Cardiac septum (tissue), 1 donor: ENCODE measurements at regions of chr3 and their contacts with region 1.

Region 1: DNA sequence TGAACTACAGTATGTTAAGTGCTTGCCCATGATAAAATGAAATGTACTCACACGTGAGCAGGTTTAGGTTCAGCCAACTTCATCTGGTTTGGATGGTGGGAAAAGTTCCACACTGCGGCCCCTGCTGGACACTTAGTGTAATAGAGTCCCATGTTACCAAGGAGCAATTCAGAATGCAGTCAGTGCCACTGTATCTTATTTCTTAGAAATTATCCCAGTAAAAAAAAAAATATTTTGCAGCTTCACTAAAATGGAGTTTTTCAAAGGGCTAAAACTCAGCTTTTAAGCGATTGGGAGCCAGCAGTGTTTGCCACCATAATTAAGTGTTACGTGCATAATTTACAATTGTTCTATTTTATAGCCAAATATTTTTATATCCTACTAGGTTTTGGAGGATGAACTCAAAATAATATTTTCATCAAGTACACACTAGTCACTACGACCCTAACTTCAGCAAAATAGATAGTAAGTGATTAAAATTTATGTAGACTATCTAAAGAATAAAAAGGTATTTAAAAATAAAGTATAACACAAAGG is 371.7 kb upstream of the GBE1 start:
- DNase-seq: peak; percentile 77

Region 2: DNA sequence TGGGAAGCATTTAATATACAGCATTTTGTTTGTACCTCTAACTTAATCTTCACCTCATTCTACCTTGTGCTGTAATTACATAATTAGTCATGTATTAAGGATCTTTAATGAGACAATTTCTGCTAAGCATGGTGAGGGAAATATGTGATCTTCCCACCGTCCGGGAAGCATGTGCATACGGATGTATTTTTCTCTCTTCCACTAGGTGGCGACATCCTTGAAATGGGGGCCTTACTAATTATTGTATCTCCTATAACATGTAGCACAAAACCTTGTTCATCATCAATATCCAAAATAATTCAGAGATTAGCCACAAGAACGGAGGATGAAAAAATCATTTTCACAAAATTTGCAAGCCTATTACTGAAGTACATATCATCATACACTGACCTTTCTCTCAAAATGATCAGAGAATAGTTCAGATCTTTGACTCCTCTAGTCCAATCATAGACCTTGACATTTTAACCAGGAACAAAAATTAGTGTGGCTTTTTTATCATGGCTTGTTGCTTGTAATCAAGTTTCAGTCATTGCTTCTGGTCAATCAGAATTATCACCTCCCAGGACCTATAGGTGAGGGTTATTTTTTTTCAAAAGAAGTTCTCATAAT is 222.8 kb before region 1 on chr3:
- intact Hi-C with region 1: loop called (anchors 5 kb)
- DNase-seq: no peak

Region 3: GRCh38 chr3:82186017-82186416 is 52.9 kb after region 1 on chr3:
- intact Hi-C with region 1: no loop called
- DNase-seq: no peak

Region 4: DNA sequence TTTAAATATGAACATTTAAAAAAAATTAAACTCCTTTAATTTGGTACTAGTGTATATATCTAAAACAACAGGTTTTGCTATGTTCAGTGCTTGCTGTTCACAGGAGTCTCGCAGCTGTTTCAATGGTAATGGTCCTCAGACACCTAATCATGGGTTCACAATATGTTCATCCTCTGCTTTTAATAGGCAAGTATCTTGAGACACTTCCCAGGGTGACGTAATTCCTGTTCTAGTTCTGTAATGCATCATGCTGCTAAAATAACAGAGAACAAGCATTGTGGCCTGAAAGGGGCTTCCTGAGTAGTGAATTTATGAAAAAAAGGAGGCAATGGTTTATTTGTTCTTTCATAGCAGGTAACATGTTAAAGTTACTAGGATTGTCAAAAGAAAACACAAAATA is 253.5 kb after region 1 on chr3:
- intact Hi-C with region 1: no loop called
- DNase-seq: no peak